BJ (cell line): ENCODE measurements at regions of chr1 and their contacts with region 1.

Region 1: DNA sequence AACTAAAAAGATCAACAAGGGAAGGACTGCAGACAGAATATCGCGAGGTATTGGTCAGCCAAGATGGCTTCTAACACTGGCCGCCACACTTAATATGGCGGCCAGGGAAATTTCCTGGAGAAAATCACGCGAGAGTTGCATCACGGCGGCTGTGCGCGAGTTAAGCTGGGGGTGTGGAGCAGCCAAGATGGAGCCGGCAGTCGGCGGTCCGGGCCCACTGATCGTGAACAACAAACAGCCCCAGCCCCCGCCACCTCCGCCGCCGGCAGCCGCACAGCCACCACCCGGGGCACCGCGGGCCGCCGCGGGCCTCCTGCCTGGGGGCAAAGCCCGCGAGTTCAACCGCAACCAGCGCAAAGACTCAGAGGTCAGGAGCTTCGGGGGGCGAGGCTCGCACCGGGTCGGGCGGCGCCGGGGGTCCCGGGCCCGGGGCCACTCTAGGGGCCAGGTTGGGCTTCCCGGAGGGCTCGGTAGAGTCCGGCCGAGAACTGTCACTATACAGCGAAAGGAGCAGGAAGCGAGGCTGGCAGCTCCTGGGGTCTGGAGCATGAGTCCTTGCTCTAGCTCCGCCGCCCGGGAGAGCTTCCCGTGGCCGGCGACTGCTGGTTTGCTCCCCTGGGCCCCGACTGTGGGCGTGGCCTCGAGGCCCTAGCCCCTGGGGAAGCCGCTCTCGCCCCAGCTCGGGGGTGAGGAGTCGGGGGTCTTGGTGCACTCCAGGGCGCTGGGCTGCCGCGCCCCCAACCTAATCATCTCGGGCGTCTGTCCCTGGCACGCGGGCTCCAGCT is at the start of gene STRIP1:
- DNase-seq: peak; percentile 87
- H3K4me3 ChIP-seq: peak within 1 kb of the TSS; percentile 79
- H3K27me3 ChIP-seq: no peaks in the 10 kb centered on the region
- CTCF ChIP-seq: no peak
- polyA plus RNA-seq, gene STRIP1: 37.3 and 46.2 TPM in 2 replicates

Region 2: DNA sequence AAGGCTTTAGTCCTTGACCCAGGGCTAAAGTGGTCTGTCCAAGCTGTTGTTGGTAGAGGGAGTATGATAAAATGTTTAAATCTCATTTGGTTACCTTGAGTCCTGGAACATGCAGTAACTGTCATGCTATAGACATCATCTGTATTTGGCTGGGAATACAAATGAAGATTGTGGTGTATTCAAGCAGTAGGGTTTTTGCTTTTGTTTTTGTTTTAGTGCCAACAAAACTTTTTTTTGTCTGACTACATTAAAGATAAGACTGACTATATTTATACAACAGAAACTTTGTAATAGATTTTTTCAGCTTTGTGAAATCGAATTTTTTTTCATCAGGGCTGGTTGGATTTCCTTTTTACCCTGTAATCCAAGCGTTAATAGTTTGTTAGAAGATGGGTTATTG is 828.3 kb before region 1 on chr1:
- CTCF ChIA-PET with region 1: no interaction called
- POLR2A ChIA-PET with region 1: interaction called, 18 read pairs
- DNase-seq: no peak
- H3K4me3 ChIP-seq: no peak overlapping the region
- H3K27me3 ChIP-seq: no peaks in the 10 kb centered on the region
- CTCF ChIP-seq: no peak

Region 3: DNA sequence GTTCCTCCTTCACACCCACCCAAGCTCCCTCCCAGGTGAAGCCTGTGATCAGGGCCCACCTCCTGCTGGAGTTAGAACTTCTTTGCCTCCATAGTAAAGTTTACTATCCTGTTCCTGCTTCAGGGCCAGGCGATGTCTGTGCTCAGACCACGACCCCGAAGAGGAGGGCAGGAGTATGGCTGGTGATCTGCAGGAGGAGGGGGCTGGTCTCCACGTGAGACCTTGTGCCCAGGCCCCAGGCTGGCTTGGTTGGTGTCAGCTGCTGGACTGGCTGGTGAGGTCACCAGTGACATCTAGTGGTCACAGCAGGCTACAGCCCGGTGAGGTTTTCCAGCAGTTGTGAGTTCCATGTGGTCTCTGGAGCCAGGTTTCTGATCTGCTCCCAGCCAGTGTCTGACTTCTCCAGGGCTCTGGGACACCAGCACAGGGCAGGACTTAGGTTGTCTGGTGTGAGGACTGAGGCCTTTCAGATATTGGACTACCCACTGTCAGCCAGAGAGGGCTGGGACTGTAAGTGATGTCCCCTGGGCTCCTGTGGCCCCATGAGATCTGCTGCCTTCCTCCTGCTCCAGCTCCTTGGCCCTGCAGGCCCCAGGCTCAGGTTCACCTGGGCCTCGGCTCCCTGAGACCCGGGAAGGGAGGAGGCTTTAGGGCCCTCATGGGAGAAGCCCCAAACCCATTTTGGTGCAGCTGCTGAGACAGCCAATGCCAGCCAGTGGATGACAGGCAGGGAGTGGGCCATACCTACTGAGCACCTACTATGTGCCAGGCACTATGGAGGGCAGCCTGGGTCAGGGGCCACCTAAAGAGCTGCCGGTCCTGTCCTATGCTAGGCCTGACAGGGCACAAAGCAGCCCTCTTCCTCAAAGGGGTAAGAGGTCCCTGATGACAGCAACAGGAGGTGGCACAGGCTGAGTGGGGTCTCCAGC is 71.6 kb after region 1 on chr1:
- CTCF ChIA-PET with region 1: interaction called, 24 read pairs
- POLR2A ChIA-PET with region 1: no interaction called
- DNase-seq: no peak
- H3K4me3 ChIP-seq: no peak overlapping the region
- H3K27me3 ChIP-seq: no peaks in the 10 kb centered on the region
- CTCF ChIP-seq: peak; percentile 90